ENCODE measurements at regions of chr7 and their contacts with region 1.

Region 1: GRCh38 chr7:16918288-16918895 is 36.6 kb upstream of the AGR3 start:
- DNase-seq: no peak
- ATAC-seq: no peak
- H3K4me3 Mint-ChIP-seq: no peak overlapping the region
- H3K27ac Mint-ChIP-seq: no peak overlapping the region
- H3K4me1 Mint-ChIP-seq: peaks cover 36% of the 10 kb centered on the region
- H3K27me3 Mint-ChIP-seq: no peaks in the 10 kb centered on the region
- CTCF ChIP-seq: peak; percentile 70

Region 2: DNA sequence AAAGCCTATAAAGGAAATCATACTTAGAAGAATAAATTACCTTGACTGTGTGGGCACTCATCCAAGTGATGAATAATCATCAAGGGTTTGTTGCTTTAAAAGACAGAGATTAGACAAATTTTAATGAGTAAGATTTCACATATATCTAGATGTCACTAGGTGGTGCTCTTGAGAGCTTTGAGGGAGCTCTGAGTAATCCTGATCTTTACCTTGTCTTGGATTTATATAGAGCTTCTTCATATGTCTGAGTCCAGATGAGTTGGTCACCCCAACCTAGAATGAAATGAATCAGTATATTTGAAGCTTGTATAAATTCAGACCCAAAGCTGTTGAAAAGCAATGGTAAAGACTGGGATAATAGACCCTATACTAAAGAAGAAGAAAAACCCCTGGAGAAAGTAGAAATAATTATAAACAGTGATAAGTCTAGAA is 117.3 kb before region 1 on chr7:
- CTCF ChIA-PET with region 1: interaction called, 20 read pairs
- POLR2A ChIA-PET with region 1: interaction called, 4 read pairs
- DNase-seq: no peak
- ATAC-seq: peak; percentile 83
- H3K4me3 Mint-ChIP-seq: no peak overlapping the region
- H3K27ac Mint-ChIP-seq: no peak overlapping the region
- H3K4me1 Mint-ChIP-seq: peaks cover 18% of the 10 kb centered on the region
- H3K27me3 Mint-ChIP-seq: no peaks in the 10 kb centered on the region
- CTCF ChIP-seq: no peak

Region 3: GRCh38 chr7:16891338-16891737 is 27.1 kb before region 1 on chr7:
- CTCF ChIA-PET with region 1: interaction called, 15 read pairs
- POLR2A ChIA-PET with region 1: interaction called, 4 read pairs
- DNase-seq: no peak
- ATAC-seq: peak; percentile 98
- H3K4me3 Mint-ChIP-seq: no peak overlapping the region
- H3K27ac Mint-ChIP-seq: no peak overlapping the region
- H3K4me1 Mint-ChIP-seq: peaks cover 6% of the 10 kb centered on the region; the same call in 1 of the 2 replicates
- H3K27me3 Mint-ChIP-seq: no peaks in the 10 kb centered on the region
- CTCF ChIP-seq: no peak